Activated CD4-positive, alpha-beta memory T cell treated with anti-CD3 and anti-CD28 coated beads, Interleukin-2, amount 10 ng/mL, durations not matched to agents 7 days and 5 days (primary cell): ENCODE measurements at regions of chr10 and their contacts with region 1.

Region 1: GRCh38 chr10:6083523-6084475 is 5.0 kb upstream of the RBM17 start:
- DNase-seq: peak; percentile 77
- H3K4me3 Mint-ChIP-seq: peak overlapping the region; percentile 68
- H3K27ac Mint-ChIP-seq: peak overlapping the region; percentile 86
- H3K4me1 Mint-ChIP-seq: peaks cover 74% of the 10 kb centered on the region
- H3K27me3 Mint-ChIP-seq: no peaks in the 10 kb centered on the region

Region 2: GRCh38 chr10:5958077-5958476 is 125.7 kb before region 1 on chr10:
- CTCF ChIA-PET with region 1: no interaction called
- POLR2A ChIA-PET with region 1: no interaction called
- DNase-seq: no peak
- H3K4me3 Mint-ChIP-seq: no peak overlapping the region
- H3K27ac Mint-ChIP-seq: no peak overlapping the region
- H3K4me1 Mint-ChIP-seq: no peaks in the 10 kb centered on the region
- H3K27me3 Mint-ChIP-seq: no peaks in the 10 kb centered on the region

Region 3: GRCh38 chr10:6033954-6034353 is 49.8 kb before region 1 on chr10:
- CTCF ChIA-PET with region 1: interaction called, 17 read pairs
- POLR2A ChIA-PET with region 1: interaction called, 12 read pairs
- DNase-seq: no peak
- H3K4me3 Mint-ChIP-seq: no peak overlapping the region
- H3K27ac Mint-ChIP-seq: peak overlapping the region; percentile 48
- H3K4me1 Mint-ChIP-seq: peaks cover 74% of the 10 kb centered on the region
- H3K27me3 Mint-ChIP-seq: no peaks in the 10 kb centered on the region

Region 4: DNA sequence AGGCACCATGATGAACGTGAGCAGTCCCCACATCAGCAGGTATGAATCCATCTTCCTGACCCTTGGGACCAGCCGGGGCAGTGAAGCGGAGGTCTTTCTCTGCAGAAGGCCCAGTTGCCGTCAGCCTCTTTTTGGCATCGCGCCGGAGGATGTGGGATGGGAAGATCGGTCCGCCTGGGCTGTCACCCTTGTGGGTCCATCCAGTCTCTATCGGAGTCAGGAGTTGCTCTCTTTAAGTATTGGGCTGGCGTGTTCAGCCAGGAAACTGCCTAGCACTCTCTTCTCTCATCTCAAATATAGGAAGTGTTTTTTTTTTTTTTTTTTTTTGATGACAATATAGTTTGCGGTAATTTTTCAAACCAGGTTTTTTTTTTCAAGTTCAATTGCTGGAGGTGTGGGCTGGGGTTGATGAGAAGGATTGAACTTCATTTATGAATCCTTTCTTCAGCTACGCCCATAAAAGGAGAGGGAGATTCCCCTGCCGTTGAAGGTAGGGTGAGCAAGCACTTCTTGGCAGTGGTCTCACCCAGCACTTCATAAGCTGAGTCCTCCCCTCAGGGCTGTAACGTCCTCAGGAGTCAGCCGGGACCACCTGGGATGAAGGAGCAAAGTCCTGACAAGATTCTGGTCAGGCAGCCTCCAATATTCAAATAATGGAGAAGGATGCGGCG is 21.6 kb before region 1 on chr10 and contains the start of gene IL2RA:
- CTCF ChIA-PET with region 1: interaction called, 138 read pairs
- POLR2A ChIA-PET with region 1: interaction called, 168 read pairs
- DNase-seq: peak; percentile 77
- H3K4me3 Mint-ChIP-seq: peak within 1 kb of the TSS; percentile 90
- H3K27ac Mint-ChIP-seq: peak within 1 kb of the TSS; percentile 90
- H3K4me1 Mint-ChIP-seq: peaks cover 71% of the 10 kb centered on the region
- H3K27me3 Mint-ChIP-seq: no peaks in the 10 kb centered on the region
- total RNA-seq, gene IL2RA: 437 to 446 TPM

Region 5: GRCh38 chr10:6068422-6068821 is 15.4 kb before region 1 on chr10:
- CTCF ChIA-PET with region 1: interaction called, 138 read pairs
- POLR2A ChIA-PET with region 1: interaction called, 168 read pairs
- DNase-seq: peak; percentile 50
- H3K4me3 Mint-ChIP-seq: peak overlapping the region; percentile 67
- H3K27ac Mint-ChIP-seq: peak overlapping the region; percentile 96
- H3K4me1 Mint-ChIP-seq: peaks cover 97% of the 10 kb centered on the region
- H3K27me3 Mint-ChIP-seq: no peaks in the 10 kb centered on the region

Region 6: DNA sequence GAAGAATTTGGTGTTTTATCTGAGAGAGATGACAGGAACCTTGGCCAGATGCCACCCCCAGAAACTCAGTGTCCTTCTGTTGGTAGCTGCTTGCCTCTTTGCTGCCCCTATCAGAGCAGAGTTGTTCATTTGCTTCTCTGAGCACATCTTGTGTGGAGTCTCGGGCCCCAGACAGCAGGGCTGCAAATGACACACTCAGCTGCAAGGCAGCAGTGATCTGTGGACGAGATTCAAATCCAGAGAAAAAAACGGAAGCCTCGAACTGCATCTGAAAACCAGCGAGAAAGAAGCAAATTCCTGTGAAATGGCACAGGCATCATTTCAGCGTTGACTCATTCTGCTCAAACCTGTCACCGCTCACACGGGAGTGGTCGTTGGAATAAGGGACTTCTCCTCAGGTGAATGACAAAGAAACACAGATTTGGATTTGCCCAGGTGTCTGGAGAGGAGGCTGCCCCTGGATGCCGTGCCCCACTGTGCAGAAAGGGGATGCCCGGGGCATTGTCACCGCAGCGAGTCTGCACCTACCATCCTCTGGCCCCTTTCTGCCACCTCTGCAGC is 263.7 kb after region 1 on chr10:
- CTCF ChIA-PET with region 1: no interaction called
- POLR2A ChIA-PET with region 1: no interaction called
- DNase-seq: peak; percentile 52
- H3K4me3 Mint-ChIP-seq: peak overlapping the region; percentile 64
- H3K27ac Mint-ChIP-seq: peak overlapping the region; percentile 92
- H3K4me1 Mint-ChIP-seq: peaks cover 47% of the 10 kb centered on the region
- H3K27me3 Mint-ChIP-seq: peaks cover 3% of the 10 kb centered on the region